Motor neuron (in vitro differentiated cells): ENCODE measurements at regions of chr14 and their contacts with region 1.

Region 1: DNA sequence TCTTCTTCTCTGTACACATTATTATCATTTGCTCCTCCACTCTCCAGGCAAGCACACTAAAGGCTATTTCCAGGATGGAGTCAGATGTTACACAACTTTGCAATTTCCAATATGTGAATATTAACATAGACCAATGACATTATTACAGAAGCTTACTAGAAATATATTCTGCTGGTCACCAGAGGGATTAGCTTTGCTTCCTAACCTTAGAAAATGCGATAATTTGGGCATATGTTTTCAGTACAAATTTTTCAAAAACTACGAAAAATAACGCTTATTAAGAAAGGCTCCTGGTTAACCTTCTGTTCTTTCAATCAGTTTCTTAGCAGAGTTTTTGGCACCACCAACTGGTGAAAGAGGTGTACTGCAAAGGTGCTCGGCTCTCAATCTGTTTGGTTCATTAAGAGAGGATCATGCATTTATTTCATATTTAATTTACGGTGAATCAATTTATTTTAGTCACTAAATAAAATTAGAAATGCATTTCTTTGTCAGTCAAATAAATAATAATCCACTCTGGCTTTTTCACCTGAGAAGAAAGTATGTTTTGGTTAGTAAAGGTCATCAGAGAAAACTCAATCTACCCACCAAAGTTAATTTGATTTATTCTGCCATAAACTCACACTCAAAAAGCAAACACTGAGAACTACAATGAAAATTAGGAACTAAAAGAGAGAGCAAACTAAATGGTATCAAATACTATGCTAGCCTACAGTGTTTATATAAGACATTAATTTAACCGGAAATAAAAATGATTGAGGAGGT is 39.2 kb downstream of the EFCAB11 start:
- ATAC-seq: peak in 3 of 8 experiments; percentile 33 to 54 (median 46)
- H3K4me3 ChIP-seq: no peak overlapping the region
- H3K27ac ChIP-seq: no peak overlapping the region
- H3K4me1 ChIP-seq: peaks cover 27 to 38% of the 10 kb centered on the region in 2 donors

Region 2: DNA sequence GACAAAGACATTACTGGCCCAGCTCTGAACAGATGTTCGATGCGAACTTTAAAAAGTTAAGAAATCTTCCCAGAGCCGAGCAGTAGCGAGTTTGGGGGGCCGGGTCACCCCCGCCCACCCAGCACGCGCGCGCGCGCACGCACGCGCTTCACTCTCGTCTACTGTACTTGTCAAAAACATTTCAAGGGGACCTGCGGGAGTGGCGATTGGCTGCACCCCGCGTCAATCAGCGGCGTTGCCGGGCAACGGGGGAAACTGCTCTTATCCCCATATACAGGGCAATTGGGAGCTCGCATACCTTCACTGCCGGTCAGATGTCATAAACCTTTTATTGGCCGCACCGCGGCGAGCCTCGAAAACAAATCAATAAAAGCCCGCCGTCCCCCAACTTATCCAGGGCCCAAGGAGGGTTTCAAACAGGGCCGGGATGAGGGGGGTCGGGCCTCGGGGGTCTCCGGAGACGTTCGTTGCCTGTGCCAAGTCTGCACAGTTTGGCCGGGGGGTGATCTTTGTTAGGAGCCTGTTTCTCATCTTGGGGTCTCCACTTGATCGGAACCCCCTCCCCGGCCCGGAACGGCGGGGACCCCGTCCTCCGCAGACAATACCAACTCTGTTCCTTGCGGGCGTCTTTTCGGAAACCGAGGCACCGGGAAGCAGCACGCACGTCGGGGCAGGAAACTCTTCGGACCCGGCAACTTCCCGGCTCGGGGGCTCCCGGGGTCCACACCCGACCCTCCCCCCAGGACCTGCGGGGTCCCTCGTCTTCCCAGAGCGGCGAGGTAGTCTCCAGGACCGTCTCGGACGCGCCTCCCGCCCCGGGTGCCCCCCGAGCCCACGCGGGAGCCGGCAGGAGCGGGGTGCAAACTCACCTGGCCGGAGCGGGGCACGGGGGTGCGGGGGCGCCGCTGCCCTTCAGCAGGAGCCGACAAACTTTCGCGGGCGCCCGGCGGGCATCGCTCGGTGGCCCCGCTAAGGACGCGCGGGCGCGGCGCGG is 499.0 kb before region 1 on chr14:
- in situ Hi-C with region 1: loop called in 1 of 9 experiments (anchors 25 kb)
- ATAC-seq: peak; percentile 63 to 77 (median 68)
- H3K4me3 ChIP-seq: peak overlapping the region; percentile 49 to 84 (median 80)
- H3K27ac ChIP-seq: peak overlapping the region; percentile 42 to 92
- H3K4me1 ChIP-seq: peaks cover 11 to 12% of the 10 kb centered on the region in 2 donors

Region 3: GRCh38 chr14:89792489-89793366 is 122.6 kb before region 1 on chr14:
- in situ Hi-C with region 1: loop called in 1 of 9 experiments (anchors 25 kb)
- ATAC-seq: peak in 1 of 8 experiments; percentile 38
- H3K4me3 ChIP-seq: no peak overlapping the region
- H3K27ac ChIP-seq: peak overlapping the region in 1 of 2 donors; percentile 42
- H3K4me1 ChIP-seq: peaks cover 7 to 13% of the 10 kb centered on the region in 2 donors